Activated B cell treated with CpG ODN at 0.5 μM for 24 hours (primary cell): ENCODE measurements at regions of chr14 and their contacts with region 1.

Region 1: GRCh38 chr14:24241829-24242443 is 487 bp downstream of the TINF2 start:
- DNase-seq: peak; percentile 91
- ATAC-seq: peak; percentile 81
- H3K4me3 Mint-ChIP-seq: peak overlapping the region; percentile 99
- H3K27ac Mint-ChIP-seq: peak overlapping the region; percentile 100
- H3K4me1 Mint-ChIP-seq: peaks cover 68% of the 10 kb centered on the region
- H3K27me3 Mint-ChIP-seq: no peaks in the 10 kb centered on the region
- CTCF ChIP-seq: no peak

Region 2: DNA sequence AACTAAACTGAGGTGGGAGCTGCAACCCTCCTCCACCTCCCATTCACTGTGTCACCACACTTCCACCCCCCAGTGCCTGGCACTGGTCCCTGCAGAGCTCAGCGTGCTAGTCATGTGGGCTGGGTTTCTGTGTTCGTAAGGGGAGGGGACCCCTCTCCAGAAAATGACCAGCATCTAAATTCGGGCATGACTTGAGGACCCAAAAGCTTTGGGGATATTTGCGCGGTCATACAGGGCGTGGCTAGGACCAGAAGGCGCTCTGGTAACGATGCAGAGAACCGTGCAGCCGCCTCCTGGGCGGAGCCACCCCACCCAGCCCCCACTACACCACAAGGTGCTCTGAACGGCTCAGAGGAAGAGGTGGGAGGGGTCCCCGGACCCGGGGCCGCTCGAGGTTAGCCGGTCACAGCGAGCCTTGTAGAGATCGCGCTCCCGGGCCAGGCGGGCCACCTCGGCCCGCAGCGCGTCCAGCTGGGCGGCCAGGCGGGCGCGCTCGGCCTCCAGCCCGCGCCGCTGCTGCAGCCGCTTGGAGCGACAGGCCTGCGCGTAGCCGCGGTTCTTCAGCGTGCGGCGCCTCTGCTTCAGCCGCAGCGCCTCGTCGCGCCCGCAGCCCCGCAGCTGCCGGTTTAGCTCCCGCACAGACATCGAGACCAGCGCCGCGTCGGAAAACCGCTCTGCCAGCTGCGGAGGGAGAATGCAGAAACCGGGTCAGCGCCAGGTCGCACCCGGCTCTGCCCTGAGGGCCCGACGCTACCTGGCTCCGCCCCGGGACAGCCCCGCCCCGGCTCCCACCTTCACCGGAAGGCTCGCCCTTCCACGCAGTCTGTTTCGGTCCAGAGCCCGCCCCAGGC is 160.8 kb before region 1 on chr14:
- CTCF ChIA-PET with region 1: no interaction called
- POLR2A ChIA-PET with region 1: interaction called, 16 read pairs
- intact Hi-C with region 1: no loop called
- DNase-seq: peak; percentile 75
- ATAC-seq: peak; percentile 95
- H3K4me3 Mint-ChIP-seq: peak overlapping the region; percentile 82
- H3K27ac Mint-ChIP-seq: peak overlapping the region; percentile 83
- H3K4me1 Mint-ChIP-seq: peaks cover 32% of the 10 kb centered on the region
- H3K27me3 Mint-ChIP-seq: no peaks in the 10 kb centered on the region
- CTCF ChIP-seq: no peak

Region 3: DNA sequence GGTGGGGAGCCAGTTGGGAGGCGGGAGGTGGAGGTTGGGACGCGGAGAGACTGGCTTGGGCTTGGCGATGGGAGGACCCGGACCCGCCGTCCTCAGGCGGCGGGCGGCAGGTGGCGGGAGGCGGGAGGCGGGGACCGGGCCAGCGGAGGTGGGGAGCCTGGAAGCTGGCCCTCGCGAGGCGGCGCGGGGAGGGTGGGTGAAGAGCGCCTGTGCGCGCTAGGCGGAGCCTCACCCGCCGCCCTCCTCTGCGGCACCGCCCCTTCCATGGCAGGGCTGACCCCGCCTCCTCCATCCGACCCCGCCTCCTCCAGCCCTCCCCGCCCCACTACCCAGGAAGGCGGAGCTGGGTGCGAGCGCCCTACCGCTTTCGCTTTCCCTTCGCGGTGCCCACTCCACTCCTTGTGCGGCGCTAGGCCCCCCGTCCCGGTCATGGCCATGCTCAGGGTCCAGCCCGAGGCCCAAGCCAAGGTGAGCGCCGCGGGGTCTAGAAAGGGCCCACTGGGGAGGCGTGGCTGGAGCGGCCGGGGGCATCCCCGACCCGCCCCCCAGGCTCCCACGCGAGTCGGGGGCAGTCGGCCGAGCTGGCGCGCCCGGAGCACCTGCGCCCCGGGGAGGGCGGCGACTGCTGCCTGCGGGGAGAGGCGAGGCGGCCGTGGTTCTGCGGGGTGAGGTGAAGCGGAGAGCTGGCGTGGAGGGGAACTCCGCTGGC is 105.9 kb before region 1 on chr14 and contains the start of gene PSME1:
- CTCF ChIA-PET with region 1: no interaction called
- POLR2A ChIA-PET with region 1: interaction called, 19 read pairs
- intact Hi-C with region 1: no loop called
- DNase-seq: peak; percentile 94
- ATAC-seq: peak; percentile 97
- H3K4me3 Mint-ChIP-seq: peak within 1 kb of the TSS; percentile 91
- H3K27ac Mint-ChIP-seq: peak within 1 kb of the TSS; percentile 90
- H3K4me1 Mint-ChIP-seq: peaks cover 57% of the 10 kb centered on the region
- H3K27me3 Mint-ChIP-seq: no peaks in the 10 kb centered on the region
- CTCF ChIP-seq: no peak
- total RNA-seq, gene PSME1: 406 and 449 TPM in 2 replicates

Region 4: GRCh38 chr14:24195191-24196070 is 46.5 kb before region 1 on chr14 and contains the start of gene TM9SF1:
- CTCF ChIA-PET with region 1: interaction called, 10 read pairs
- POLR2A ChIA-PET with region 1: interaction called, 38 read pairs
- intact Hi-C with region 1: loop called (anchors 1 kb)
- DNase-seq: peak; percentile 91
- ATAC-seq: peak; percentile 83
- H3K4me3 Mint-ChIP-seq: peak within 1 kb of the TSS; percentile 96
- H3K27ac Mint-ChIP-seq: peak within 1 kb of the TSS; percentile 97
- H3K4me1 Mint-ChIP-seq: peaks cover 48% of the 10 kb centered on the region
- H3K27me3 Mint-ChIP-seq: no peaks in the 10 kb centered on the region
- CTCF ChIP-seq: no peak
- total RNA-seq, gene TM9SF1: 24.5 and 26.3 TPM in 2 replicates

Region 5: GRCh38 chr14:24289649-24290249 is 47.8 kb after region 1 on chr14:
- CTCF ChIA-PET with region 1: interaction called, 13 read pairs
- POLR2A ChIA-PET with region 1: interaction called, 25 read pairs
- intact Hi-C with region 1: no loop called
- DNase-seq: no peak
- ATAC-seq: peak; percentile 97
- H3K4me3 Mint-ChIP-seq: peak overlapping the region; percentile 15
- H3K27ac Mint-ChIP-seq: peak overlapping the region; percentile 70
- H3K4me1 Mint-ChIP-seq: peaks cover 27% of the 10 kb centered on the region
- H3K27me3 Mint-ChIP-seq: no peaks in the 10 kb centered on the region
- CTCF ChIP-seq: no peak

Region 6: GRCh38 chr14:24366721-24367513 is 125.0 kb after region 1 on chr14:
- CTCF ChIA-PET with region 1: interaction called, 3 read pairs
- POLR2A ChIA-PET with region 1: interaction called, 18 read pairs
- intact Hi-C with region 1: loop called (anchors 1 kb)
- DNase-seq: peak; percentile 100
- ATAC-seq: peak; percentile 83
- H3K4me3 Mint-ChIP-seq: peak overlapping the region; percentile 85
- H3K27ac Mint-ChIP-seq: peak overlapping the region; percentile 80
- H3K4me1 Mint-ChIP-seq: peaks cover 33% of the 10 kb centered on the region
- H3K27me3 Mint-ChIP-seq: peaks cover 5% of the 10 kb centered on the region
- CTCF ChIP-seq: no peak

Region 7: GRCh38 chr14:25400607-25401206 is 1158.8 kb after region 1 on chr14:
- CTCF ChIA-PET with region 1: no interaction called
- POLR2A ChIA-PET with region 1: no interaction called
- intact Hi-C with region 1: no loop called
- DNase-seq: no peak
- ATAC-seq: no peak
- H3K4me3 Mint-ChIP-seq: no peak overlapping the region
- H3K27ac Mint-ChIP-seq: no peak overlapping the region
- H3K4me1 Mint-ChIP-seq: no peaks in the 10 kb centered on the region
- H3K27me3 Mint-ChIP-seq: peaks cover 1% of the 10 kb centered on the region
- CTCF ChIP-seq: peak; percentile 16